MCF 10A (cell line): ENCODE measurements at regions of chr16 and their contacts with region 1.

Region 1: GRCh38 chr16:58843675-58844074 is 109.6 kb upstream of the GOT2 start:
- DNase-seq: peak; percentile 9
- H3K4me3 Mint-ChIP-seq: no peak overlapping the region
- H3K27ac Mint-ChIP-seq: no peak overlapping the region
- H3K4me1 Mint-ChIP-seq: no peaks in the 10 kb centered on the region
- H3K27me3 Mint-ChIP-seq: no peaks in the 10 kb centered on the region
- CTCF ChIP-seq: peak; percentile 56

Region 2: DNA sequence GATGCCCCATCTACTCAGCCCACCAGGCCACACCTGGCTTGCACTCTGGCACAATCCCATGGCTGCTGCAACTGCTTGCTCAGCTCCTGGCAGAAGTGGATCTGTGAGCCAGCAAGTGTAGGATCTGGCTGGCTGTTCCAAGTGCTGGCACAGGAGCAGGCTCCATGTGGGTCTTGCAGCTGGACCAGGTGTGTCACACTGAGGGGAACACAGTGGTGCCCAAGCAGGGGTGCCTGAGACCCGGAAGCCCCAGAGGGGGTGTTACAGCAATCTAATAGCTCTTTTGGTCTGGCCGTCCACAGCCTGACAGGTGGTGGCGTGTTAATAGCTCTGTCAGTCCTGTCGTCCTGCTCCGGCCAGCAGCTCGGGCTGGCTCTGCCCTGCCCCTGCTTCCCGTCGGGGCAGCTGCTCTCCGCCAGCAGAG is 90.0 kb before region 1 on chr16:
- CTCF ChIA-PET with region 1: no interaction called
- POLR2A ChIA-PET with region 1: no interaction called
- intact Hi-C with region 1: no loop called
- DNase-seq: no peak
- H3K4me3 Mint-ChIP-seq: no peak overlapping the region
- H3K27ac Mint-ChIP-seq: no peak overlapping the region
- H3K4me1 Mint-ChIP-seq: no peaks in the 10 kb centered on the region
- H3K27me3 Mint-ChIP-seq: no peaks in the 10 kb centered on the region
- CTCF ChIP-seq: no peak

Region 3: DNA sequence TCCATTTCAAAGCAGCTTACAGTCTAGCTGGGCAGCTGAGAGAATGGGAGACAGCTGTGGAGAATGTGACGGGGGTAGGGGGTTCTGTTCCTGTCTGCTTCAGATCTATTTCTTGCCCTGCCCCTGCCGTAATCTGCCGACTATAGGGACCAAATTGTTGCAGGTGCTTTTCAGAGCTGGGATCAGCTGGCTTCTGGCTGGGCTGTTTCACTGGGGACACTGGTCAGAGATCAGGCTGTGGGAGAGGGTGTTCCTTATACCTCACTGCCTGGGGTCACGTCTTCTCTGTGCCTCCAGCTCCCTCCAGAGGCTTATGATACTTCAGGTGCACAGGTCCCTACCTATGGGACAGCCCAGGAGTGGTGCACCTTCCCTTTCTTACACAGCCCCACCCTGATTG is 405.3 kb after region 1 on chr16:
- CTCF ChIA-PET with region 1: interaction called, 6 read pairs
- POLR2A ChIA-PET with region 1: no interaction called
- intact Hi-C with region 1: loop called (anchors 1 kb)
- DNase-seq: no peak
- H3K4me3 Mint-ChIP-seq: no peak overlapping the region
- H3K27ac Mint-ChIP-seq: no peak overlapping the region
- H3K4me1 Mint-ChIP-seq: no peaks in the 10 kb centered on the region
- H3K27me3 Mint-ChIP-seq: no peaks in the 10 kb centered on the region
- CTCF ChIP-seq: no peak

Region 4: DNA sequence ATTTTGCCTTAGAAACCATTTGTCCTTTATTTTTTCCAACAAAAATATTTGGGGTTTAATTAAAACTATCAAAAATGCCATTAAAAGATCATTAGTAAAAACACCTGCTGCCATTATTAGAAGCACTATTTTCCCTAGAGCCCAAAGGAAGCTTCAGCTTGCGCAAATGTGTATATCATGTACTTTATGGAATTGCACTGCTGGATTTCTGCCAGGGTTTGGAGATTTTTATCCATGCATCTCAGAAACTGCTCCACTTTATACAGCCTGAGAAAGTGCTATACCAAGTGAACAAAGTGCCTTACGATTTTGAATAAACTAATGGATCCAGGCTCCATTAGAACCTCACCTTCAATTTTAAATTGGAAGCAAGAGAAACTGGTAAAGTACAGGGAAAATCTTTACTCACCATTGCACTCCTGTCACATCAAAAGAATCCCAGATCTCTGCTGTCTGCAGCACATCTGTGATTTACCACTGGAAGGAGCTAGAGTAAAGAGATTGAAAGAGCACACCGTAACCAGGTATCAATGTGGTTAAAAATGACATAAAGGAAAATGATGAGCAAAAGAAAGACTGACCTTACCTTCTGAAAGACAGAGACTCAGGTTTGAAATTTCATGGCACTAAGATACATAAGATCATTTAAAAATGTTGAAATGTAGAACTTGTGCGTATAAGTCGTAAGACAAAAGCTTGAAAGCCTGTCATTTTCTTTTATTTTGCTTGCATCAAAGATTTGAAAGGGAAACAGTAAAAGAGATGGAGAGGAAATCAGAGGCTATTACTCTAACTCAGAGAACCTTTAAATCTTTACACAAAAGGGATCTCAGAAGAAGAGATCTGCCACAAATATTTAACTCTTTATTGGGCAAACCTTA is 568.5 kb after region 1 on chr16:
- CTCF ChIA-PET with region 1: interaction called, 3 read pairs
- POLR2A ChIA-PET with region 1: no interaction called
- intact Hi-C with region 1: loop called (anchors 5 kb)
- DNase-seq: peak; percentile 9
- H3K4me3 Mint-ChIP-seq: no peak overlapping the region
- H3K27ac Mint-ChIP-seq: no peak overlapping the region
- H3K4me1 Mint-ChIP-seq: no peaks in the 10 kb centered on the region
- H3K27me3 Mint-ChIP-seq: no peaks in the 10 kb centered on the region
- CTCF ChIP-seq: peak; percentile 68

Region 5: GRCh38 chr16:59973966-59974365 is 1130.3 kb after region 1 on chr16:
- CTCF ChIA-PET with region 1: no interaction called
- POLR2A ChIA-PET with region 1: no interaction called
- intact Hi-C with region 1: loop called (anchors 5 kb)
- DNase-seq: peak; percentile 40
- H3K4me3 Mint-ChIP-seq: no peak overlapping the region
- H3K27ac Mint-ChIP-seq: no peak overlapping the region
- H3K4me1 Mint-ChIP-seq: peaks cover 7% of the 10 kb centered on the region
- H3K27me3 Mint-ChIP-seq: no peaks in the 10 kb centered on the region
- CTCF ChIP-seq: no peak

Region 6: GRCh38 chr16:60755907-60756306 is 1912.2 kb after region 1 on chr16:
- CTCF ChIA-PET with region 1: no interaction called
- POLR2A ChIA-PET with region 1: no interaction called
- intact Hi-C with region 1: loop called (anchors 5 kb)
- DNase-seq: no peak
- H3K4me3 Mint-ChIP-seq: no peak overlapping the region
- H3K27ac Mint-ChIP-seq: no peak overlapping the region
- H3K4me1 Mint-ChIP-seq: no peaks in the 10 kb centered on the region
- H3K27me3 Mint-ChIP-seq: no peaks in the 10 kb centered on the region
- CTCF ChIP-seq: peak; percentile 40